Activated CD4-positive, alpha-beta memory T cell treated with anti-CD3 and anti-CD28 coated beads for 36 hours (primary cell): ENCODE measurements at regions of chr21 and their contacts with region 1.

Region 1: DNA sequence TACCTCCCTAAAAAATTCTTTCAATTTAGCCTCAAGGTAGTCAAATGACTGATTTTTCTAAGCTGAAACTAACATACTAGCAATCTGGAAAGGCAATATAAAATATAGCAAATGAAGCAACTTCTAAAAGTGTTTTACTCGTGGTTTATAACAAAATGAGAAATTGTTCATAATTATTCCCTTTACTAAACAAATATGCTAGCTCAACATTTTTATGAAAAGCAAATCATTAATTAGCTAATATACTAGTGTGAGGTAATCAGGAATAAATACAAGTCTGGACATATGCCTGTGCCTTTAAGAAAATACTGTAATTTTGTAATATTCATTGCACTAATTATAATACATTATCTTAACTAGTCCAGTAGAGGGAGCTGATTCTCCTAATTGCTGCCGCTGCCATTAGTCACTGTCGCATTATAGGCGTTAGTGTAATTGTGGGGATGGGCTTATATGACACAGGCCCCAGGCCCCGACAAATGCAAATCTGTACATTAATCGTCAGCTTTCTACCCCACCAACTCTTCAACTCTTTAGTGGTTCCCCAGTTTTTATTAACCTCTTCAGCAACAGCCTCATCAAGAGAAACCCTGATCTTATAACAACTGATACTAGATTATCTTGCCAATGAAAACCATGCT is 160.9 kb downstream of the GABPA start:
- DNase-seq: peak; percentile 17
- H3K4me3 Mint-ChIP-seq: no peak overlapping the region
- H3K27ac Mint-ChIP-seq: no peak overlapping the region
- H3K4me1 Mint-ChIP-seq: no peaks in the 10 kb centered on the region
- H3K27me3 Mint-ChIP-seq: no peaks in the 10 kb centered on the region

Region 2: GRCh38 chr21:25881525-25882376 is 13.9 kb before region 1 on chr21:
- CTCF ChIA-PET with region 1: interaction called, 17 read pairs
- POLR2A ChIA-PET with region 1: no interaction called
- intact Hi-C with region 1: no loop called
- DNase-seq: peak; percentile 71
- H3K4me3 Mint-ChIP-seq: no peak overlapping the region
- H3K27ac Mint-ChIP-seq: no peak overlapping the region
- H3K4me1 Mint-ChIP-seq: no peaks in the 10 kb centered on the region
- H3K27me3 Mint-ChIP-seq: no peaks in the 10 kb centered on the region

Region 3: DNA sequence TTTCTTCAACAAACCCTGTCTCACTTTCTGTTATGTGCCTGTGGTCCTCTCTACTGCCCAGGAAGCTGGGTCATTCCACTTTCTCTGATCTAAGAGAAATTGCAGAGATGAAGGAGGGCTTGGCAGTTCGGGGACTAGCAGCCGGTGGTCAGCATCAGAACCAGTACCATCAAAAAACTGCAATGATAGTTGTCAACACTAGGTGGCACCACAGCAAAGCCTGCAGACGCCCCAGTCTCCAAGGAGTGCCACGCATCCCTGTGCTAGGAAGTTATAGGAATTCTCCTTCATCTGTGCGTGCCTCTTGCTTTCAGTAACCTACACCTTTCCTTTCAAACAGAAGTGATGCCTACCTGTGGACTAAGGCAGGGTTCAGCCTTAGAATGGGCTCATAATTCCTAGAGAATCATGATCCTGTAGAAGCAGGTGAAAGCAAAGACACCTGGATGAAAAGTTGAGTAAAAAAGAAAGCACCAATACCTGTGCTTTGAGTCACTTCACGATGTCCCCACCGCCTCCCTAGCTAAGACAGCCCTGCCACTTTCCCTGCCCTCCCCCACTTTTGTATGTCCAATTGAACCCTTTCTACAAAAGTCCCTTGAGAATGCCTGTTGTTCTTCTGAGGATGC is 820.3 kb after region 1 on chr21:
- CTCF ChIA-PET with region 1: interaction called, 4 read pairs
- POLR2A ChIA-PET with region 1: no interaction called
- intact Hi-C with region 1: loop called (anchors 5 kb)
- DNase-seq: peak; percentile 17
- H3K4me3 Mint-ChIP-seq: no peak overlapping the region
- H3K27ac Mint-ChIP-seq: no peak overlapping the region
- H3K4me1 Mint-ChIP-seq: no peaks in the 10 kb centered on the region
- H3K27me3 Mint-ChIP-seq: peaks cover 2% of the 10 kb centered on the region